ENCODE measurements at regions of chr11 and their contacts with region 1.

Region 1: DNA sequence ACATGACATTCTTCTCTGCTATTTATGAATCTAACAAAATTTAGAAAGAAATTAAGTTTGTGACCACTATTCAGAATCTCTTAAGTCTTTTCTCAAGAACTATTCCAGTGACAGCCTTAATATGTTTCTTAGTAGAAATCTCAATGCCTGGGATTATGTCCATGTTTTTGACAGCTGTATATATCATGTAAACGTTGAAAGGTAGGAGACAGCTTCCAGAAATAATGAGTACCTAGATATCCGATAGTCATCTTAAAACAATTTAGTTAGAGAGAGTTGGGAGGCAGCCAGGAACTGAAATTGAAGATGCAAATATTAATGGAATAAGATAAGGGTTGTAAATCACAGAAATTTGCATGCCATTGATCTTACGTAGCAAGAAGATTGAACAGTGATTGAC is 955.2 kb downstream of the JRKL start:
- DNase-seq: no peak
- ATAC-seq: no peak
- H3K4me3 ChIP-seq: no peak overlapping the region
- H3K4me3 Mint-ChIP-seq: no peak overlapping the region
- H3K27ac ChIP-seq: no peak overlapping the region
- H3K27ac Mint-ChIP-seq: no peak overlapping the region
- H3K4me1 ChIP-seq: no peaks in the 10 kb centered on the region
- H3K4me1 Mint-ChIP-seq: no peaks in the 10 kb centered on the region
- H3K27me3 ChIP-seq: no peaks in the 10 kb centered on the region
- H3K27me3 Mint-ChIP-seq: no peaks in the 10 kb centered on the region

Region 2: DNA sequence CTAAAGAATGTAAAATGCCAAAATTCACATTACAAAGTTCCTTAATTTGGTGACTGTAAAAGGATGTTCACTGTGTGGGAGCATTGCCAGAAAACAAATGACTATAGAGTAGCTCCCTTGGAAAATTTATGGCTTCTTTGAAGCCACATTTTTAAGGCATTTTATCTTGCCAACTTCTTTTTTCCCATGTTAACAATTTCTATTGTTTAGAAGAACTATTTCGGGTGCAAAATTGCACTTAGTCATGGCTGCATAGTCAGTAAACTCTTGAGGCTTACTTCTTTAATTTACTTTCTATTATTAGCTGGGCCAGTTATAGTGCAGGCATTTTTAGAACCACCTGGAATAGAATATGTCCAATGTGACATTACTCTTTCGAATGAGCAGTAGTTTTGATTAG is 439.9 kb before region 1 on chr11:
- CTCF ChIA-PET with region 1: no interaction called
- POLR2A ChIA-PET with region 1: no interaction called
- intact Hi-C with region 1: no loop called
- DNase-seq: no peak
- ATAC-seq: no peak
- H3K4me3 ChIP-seq: no peak overlapping the region
- H3K4me3 Mint-ChIP-seq: no peak overlapping the region
- H3K27ac ChIP-seq: no peak overlapping the region
- H3K27ac Mint-ChIP-seq: no peak overlapping the region
- H3K4me1 ChIP-seq: no peaks in the 10 kb centered on the region
- H3K4me1 Mint-ChIP-seq: no peaks in the 10 kb centered on the region
- H3K27me3 ChIP-seq: no peaks in the 10 kb centered on the region
- H3K27me3 Mint-ChIP-seq: no peaks in the 10 kb centered on the region

Region 3: GRCh38 chr11:97364047-97364446 is 19.0 kb after region 1 on chr11:
- CTCF ChIA-PET with region 1: no interaction called
- POLR2A ChIA-PET with region 1: no interaction called
- intact Hi-C with region 1: loop called in 1 of 2 experiments (anchors 1 kb)
- DNase-seq: no peak
- ATAC-seq: no peak
- H3K4me3 ChIP-seq: no peak overlapping the region
- H3K4me3 Mint-ChIP-seq: no peak overlapping the region
- H3K27ac ChIP-seq: no peak overlapping the region
- H3K27ac Mint-ChIP-seq: no peak overlapping the region
- H3K4me1 ChIP-seq: no peaks in the 10 kb centered on the region
- H3K4me1 Mint-ChIP-seq: no peaks in the 10 kb centered on the region
- H3K27me3 ChIP-seq: no peaks in the 10 kb centered on the region
- H3K27me3 Mint-ChIP-seq: no peaks in the 10 kb centered on the region

Measured in naive thymus-derived CD4-positive, alpha-beta T cell (primary cell).